ENCODE measurements at regions of chr1 and their contacts with region 1.

Region 1: GRCh38 chr1:96333522-96334235 is 387.9 kb upstream of the PTBP2 start:
- DNase-seq: no peak
- H3K4me3 ChIP-seq: no peak overlapping the region
- H3K27ac ChIP-seq: no peak overlapping the region
- H3K4me1 ChIP-seq: no peaks in the 10 kb centered on the region
- H3K27me3 ChIP-seq: no peaks in the 10 kb centered on the region
- CTCF ChIP-seq: no peak
- POLR2A ChIP-seq: no peak

Region 2: DNA sequence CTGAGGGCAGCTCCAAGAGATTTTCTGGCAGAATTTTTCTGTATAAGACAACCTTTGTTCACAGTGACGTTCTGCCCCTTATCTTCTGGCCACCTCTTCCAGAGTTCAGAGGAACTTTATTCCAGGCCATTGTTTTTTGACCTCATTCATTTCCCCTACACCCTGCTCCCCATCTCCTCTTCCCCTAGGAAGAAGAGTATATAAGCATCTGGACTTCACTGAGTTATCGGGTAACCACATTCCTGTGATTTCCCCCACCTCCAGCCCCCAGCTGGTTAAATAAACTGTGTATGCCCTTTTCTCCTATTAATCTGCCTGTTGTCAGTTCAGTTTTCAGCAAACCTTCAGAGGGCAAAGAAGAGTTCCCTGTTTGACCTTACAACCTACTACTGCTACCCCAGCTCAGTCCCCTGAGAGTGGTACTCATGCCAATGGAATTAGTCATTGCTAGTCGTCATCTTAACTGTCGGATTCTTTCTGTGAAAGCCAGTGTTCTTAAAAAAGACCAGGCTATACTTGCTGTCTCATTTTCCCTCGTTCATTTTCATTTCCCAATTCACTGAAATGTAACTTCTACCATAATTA is 1246.6 kb before region 1 on chr1:
- intact Hi-C with region 1: no loop called
- DNase-seq: no peak
- H3K4me3 ChIP-seq: no peak overlapping the region
- H3K27ac ChIP-seq: no peak overlapping the region
- H3K4me1 ChIP-seq: no peaks in the 10 kb centered on the region
- H3K27me3 ChIP-seq: no peaks in the 10 kb centered on the region
- CTCF ChIP-seq: no peak
- POLR2A ChIP-seq: no peak

Region 3: DNA sequence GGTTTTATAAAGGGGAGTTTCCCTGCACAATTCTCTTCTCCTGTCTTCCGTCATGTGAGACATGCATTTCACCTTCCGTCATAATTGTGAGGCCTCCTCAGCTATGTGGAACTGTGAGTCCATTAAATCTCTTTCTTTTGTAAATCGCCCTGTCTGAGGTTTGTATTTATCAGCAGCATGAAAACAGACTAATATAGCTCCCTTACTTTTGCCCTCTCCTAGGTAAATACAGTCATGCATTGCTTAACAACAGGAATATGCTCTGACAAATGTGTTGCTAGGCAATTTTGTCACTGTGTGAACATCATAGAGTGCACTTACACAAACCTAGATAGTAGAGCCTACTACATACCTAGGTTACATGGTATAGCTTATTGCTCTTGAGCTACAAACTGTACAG is 482.9 kb before region 1 on chr1:
- intact Hi-C with region 1: loop called (anchors 5 kb)
- DNase-seq: no peak
- H3K4me3 ChIP-seq: no peak overlapping the region
- H3K27ac ChIP-seq: no peak overlapping the region
- H3K4me1 ChIP-seq: no peaks in the 10 kb centered on the region
- H3K27me3 ChIP-seq: no peaks in the 10 kb centered on the region
- CTCF ChIP-seq: no peak
- POLR2A ChIP-seq: no peak